Mammary epithelial cell (primary cell): ENCODE measurements at regions of chr9 and their contacts with region 1.

Region 1: DNA sequence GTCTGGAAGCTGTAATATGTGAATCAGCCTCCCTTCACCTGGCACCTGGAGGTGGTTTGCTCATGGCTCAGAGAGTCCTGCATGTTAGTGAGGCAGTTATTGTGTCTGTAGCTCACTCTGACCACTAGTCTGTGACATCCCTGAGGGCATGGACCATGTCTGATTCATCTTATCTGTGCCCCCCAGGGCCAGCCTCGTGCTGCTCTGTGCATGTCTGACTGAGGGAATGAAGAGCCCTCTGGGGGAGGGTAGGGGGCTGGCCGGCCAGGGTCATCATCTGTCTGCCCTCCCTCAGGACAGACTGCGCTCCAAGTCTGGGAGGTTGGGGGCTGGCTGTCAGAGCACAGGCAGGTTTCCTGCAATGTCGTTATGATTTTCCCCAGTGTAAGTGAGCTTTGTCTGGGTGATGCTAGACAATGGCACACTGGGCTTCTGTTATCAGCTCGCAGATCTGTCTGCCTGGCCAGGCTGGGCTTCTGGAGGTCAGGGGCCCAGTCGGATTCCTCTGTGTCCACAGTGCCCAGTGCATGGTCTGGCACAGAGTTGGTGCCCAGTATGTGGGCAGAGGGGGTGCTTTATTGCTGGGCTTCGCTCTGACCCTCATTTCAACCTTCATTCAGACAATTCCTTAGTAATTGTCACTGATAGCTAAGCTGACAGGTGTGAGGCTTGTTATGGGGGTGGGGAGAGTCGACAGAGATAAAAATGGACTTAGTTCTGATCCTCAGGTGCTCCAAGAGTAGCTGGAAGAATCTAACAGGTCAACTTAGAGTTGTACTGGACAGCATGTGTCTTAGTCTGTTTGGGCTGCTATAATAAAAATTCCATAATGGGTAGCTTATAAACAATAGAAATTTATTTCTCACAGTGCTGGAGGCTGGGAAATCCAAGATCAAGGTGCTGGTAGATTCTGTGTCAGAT is 85.7 kb upstream of the SHB start:
- DNase-seq: peak; percentile 61
- H3K4me3 ChIP-seq: no peak overlapping the region
- H3K27ac ChIP-seq: no peak overlapping the region
- H3K4me1 ChIP-seq: peaks cover 4% of the 10 kb centered on the region
- H3K27me3 ChIP-seq: no peaks in the 10 kb centered on the region
- CTCF ChIP-seq: no peak

Region 2: DNA sequence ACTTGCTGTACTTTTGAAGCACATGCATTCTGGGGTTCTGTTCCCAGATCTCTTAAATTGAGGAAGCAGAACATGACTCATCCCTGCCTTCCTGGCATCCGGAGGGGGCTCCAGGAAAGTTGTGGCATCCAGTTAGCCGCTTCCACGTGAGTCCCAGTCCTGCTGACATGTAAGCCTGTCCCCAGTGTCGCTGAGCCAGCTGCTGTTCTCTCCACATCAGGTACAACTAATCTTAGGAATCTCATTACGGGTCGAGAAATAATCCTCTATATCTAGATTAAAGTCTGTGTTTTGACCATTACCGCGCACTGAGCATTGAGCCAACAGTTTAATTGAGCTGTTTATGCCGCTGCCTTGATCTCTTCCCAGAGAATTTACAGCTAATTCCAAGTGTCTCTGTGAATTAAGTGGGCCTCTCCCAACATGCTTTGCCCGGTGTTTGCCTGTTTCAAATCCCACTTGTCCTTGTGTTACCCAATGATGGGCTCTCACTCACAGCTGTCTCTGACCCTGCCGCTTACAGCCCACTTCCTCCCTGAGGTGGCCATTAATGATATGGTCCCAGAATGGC is 75.2 kb before region 1 on chr9:
- CTCF ChIA-PET with region 1: no interaction called
- dilution Hi-C with region 1: loop called (anchors 5 kb)
- in situ Hi-C with region 1: no loop called
- intact Hi-C with region 1: no loop called
- DNase-seq: no peak
- H3K4me3 ChIP-seq: no peak overlapping the region
- H3K27ac ChIP-seq: no peak overlapping the region
- H3K4me1 ChIP-seq: peaks cover 3% of the 10 kb centered on the region
- H3K27me3 ChIP-seq: no peaks in the 10 kb centered on the region
- CTCF ChIP-seq: no peak

Region 3: DNA sequence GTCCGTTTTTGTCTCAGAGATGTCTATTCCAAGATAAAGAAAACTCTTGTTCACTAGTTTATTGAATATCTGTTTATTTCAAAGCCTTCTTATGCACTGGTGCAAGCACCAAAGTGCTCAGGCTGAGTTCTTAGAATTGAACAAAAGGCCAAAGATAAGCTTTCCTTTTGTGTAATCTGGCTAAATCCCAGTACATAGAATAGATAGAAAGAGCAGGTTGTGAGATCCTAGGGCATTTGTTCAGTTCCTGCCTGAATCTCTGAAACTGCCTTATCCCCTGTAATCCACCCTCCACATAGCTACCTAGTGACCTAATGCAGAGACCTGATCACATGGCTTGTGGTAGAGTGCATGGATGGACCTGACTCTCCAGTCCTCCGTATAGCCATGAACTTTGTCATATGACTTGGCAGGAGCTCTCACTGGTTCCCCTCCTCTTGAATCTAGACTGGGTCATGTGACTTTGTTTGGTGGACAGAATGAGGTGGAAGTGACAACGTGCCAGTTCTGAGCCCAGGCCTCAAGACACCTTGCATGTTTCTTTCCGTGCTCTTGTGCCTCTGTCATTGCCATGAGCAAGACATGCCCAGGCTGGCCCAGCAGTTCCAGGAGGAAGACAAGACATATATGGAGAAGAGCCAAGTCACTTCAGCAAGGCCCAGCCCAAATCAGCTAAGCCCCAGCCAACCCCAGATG is 53.6 kb after region 1 on chr9:
- CTCF ChIA-PET with region 1: no interaction called
- dilution Hi-C with region 1: no loop called
- in situ Hi-C with region 1: no loop called
- intact Hi-C with region 1: loop called (anchors 10 kb)
- DNase-seq: peak; percentile 81
- H3K4me3 ChIP-seq: no peak overlapping the region
- H3K27ac ChIP-seq: peak overlapping the region; percentile 30
- H3K4me1 ChIP-seq: peaks cover 24% of the 10 kb centered on the region
- H3K27me3 ChIP-seq: no peaks in the 10 kb centered on the region
- CTCF ChIP-seq: no peak

Region 4: GRCh38 chr9:38244951-38245350 is 90.2 kb after region 1 on chr9:
- CTCF ChIA-PET with region 1: no interaction called
- dilution Hi-C with region 1: loop called (anchors 5 kb)
- in situ Hi-C with region 1: no loop called
- intact Hi-C with region 1: no loop called
- DNase-seq: no peak
- H3K4me3 ChIP-seq: no peak overlapping the region
- H3K27ac ChIP-seq: no peak overlapping the region
- H3K4me1 ChIP-seq: no peaks in the 10 kb centered on the region
- H3K27me3 ChIP-seq: no peaks in the 10 kb centered on the region
- CTCF ChIP-seq: no peak

Region 5: DNA sequence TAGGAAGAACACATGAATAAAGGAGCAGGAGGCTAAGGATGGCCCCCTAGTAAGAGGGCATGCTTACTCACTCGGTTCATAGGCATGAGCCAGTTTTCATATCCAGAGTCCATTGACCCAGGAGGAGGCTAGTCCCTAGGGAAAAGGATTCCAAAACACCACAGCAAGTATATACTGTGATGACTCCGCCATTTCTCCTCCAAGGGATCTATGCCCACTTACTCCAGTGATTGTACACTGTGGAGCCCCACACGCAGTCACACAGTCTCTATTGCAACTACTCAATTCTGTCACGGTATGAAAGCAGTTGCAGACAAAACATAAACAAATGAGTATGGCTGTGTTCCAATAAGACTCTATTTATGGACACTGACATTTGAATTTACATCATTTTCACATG is 120.0 kb after region 1 on chr9:
- CTCF ChIA-PET with region 1: no interaction called
- dilution Hi-C with region 1: no loop called
- in situ Hi-C with region 1: no loop called
- intact Hi-C with region 1: no loop called
- DNase-seq: no peak
- H3K4me3 ChIP-seq: no peak overlapping the region
- H3K27ac ChIP-seq: no peak overlapping the region
- H3K4me1 ChIP-seq: no peaks in the 10 kb centered on the region
- H3K27me3 ChIP-seq: no peaks in the 10 kb centered on the region
- CTCF ChIP-seq: no peak